BJ (cell line): ENCODE measurements at regions of chr12 and their contacts with region 1.

Region 1: DNA sequence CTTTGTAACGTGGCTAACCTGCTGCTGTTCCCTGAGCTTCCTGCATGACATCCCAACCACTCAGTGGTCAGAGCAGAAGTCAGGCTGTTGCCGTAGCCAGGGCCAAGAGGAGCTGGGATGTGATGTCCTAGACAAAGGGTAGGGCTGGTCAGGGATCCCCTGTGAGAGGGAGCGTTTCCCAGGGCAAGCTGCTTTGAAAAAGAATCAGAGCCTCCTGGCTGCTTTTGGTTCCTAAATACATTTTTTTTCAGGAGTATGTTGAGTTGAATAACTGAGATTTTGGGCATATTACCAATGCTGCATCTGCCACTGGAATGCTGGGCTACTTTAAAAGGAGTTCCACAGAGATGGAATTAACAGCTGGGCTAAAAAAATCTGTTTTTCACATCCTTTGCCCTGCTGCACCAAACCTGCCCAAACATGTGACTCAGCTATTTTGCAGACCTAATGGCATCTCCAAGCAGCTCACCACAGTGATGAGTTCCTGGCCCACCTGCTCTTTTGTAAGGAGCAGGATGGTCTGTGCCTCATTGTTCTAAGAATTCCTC is 23.9 kb downstream of the ANKRD13A start:
- DNase-seq: peak; percentile 63
- H3K4me3 ChIP-seq: no peak overlapping the region
- H3K27me3 ChIP-seq: no peaks in the 10 kb centered on the region
- CTCF ChIP-seq: no peak

Region 2: DNA sequence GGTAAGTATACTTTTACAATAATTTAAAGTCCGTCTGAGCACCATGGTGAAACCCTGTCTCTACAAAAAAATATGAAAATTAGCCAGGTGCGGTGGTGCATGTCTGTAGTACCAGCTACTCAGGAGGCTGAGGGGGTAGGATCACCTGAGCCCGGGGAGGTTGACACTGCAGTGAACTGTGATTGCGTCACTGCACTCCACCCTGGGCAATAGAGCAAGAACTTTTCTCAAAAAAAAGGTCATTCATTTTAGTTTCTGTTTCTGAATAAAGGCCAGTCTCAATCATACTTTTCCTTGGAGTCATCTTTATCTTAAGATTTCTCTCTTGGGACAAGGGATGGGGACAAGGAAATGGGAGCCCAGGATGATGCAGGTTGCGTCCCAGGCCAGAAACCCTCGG is 11.0 kb before region 1 on chr12:
- CTCF ChIA-PET with region 1: interaction called, 11 read pairs
- POLR2A ChIA-PET with region 1: interaction called, 6 read pairs
- DNase-seq: no peak
- H3K4me3 ChIP-seq: no peak overlapping the region
- H3K27me3 ChIP-seq: no peaks in the 10 kb centered on the region
- CTCF ChIP-seq: no peak

Region 3: DNA sequence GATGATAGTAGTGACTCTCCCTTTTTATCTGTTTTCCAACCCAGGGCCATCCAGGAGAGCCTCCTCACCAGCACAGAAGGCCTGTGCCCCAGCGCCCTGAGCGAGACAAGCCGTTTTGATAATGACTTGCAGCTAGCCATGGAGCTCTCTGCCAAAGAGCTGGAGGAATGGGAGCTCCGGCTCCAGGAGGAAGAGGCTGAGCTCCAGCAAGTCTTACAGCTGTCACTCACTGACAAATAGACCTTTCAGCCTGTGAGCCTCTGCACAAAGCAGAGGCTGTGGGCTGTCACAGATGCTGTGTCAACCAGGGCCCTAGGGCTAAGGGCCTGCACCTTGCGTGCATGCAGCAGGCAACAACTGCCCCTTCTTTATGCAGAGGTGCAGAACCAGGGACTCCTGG is 14.2 kb after region 1 on chr12:
- CTCF ChIA-PET with region 1: interaction called, 14 read pairs
- POLR2A ChIA-PET with region 1: interaction called, 3 read pairs
- DNase-seq: no peak
- H3K4me3 ChIP-seq: no peak overlapping the region
- H3K27me3 ChIP-seq: no peaks in the 10 kb centered on the region
- CTCF ChIP-seq: no peak

Region 4: DNA sequence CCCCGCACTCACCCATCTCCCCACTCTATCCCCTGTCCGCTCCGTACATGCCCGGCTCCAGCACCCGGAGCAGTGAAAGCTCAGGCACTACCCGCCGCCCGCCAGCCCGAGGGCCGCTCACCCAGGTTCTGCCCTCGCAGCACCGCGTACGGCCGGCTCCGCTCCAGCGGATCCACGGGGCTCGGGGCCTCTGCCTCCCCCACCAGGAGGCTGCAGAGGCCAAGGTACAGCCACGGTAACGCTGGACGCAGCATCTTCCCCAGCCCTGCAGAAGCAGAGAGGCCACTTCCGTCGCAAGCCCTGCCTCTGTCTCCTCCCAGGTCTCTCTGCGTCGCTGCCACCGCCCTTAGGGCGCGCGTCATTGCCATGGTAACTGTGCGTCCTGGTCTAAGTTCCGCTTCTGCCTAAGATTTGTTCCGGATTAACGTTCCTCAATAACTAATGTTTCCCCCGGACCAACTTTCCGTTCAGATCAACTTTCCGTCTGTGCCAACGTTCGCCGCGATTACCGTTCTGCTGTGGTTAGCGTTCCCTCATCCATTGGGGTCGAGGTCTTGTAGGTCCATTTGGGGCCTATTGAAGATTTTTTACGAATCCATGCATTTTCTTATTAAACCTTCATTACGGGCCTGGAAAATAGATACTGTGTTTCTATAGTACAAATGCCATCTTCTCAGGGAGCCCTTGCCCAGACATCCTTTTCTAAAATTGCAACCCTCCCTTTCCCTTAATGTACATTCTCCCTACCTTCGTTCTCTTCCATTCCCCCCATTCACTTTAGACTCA is 25.3 kb after region 1 on chr12 and contains the start of gene C12orf76:
- CTCF ChIA-PET with region 1: no interaction called
- POLR2A ChIA-PET with region 1: no interaction called
- DNase-seq: peak; percentile 87
- H3K4me3 ChIP-seq: peak within 1 kb of the TSS; percentile 73
- H3K27me3 ChIP-seq: no peaks in the 10 kb centered on the region
- CTCF ChIP-seq: no peak
- polyA plus RNA-seq, gene C12orf76: 8.9 and 10.0 TPM in 2 replicates